Activated naive CD8-positive, alpha-beta T cell treated with anti-CD3 and anti-CD28 coated beads, Interleukin-2, amount 10 ng/mL, durations not matched to agents 7 days and 5 days (primary cell): ENCODE measurements at regions of chr21 and their contacts with region 1.

Region 1: DNA sequence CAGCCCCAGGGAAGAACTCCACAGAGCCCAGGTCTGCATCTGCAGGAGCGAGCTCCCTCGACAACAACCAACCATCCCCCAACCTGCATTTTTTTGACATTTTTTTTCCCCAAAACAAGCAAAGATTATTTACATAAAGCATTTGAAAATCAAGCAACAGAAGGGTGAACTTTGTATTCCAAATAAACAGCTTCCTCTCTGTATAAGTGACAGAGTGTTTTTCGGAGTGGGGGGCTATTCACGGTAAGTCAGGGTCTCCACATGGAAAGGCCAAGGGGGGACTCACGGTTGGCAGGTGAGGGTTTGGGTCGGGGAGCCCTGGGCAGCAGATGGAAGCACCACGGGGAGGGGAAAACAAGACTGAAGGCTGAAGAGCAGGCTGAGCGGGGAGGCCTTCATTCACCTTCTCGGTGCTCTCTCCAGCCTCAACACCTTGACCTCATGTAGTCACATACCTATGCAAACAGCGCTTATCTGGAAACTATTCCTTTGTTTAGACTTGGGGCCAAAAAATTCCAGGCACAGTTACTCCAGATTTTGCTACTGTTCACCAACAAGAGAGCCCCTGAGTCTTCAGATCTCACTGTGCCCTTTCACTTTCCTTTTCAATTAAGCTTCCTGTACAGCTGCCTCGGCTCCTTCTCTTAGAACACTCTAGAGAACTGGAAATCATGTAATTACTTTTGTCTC is 27.6 kb downstream of the C2CD2 start:
- DNase-seq: peak; percentile 52
- ATAC-seq: peak; percentile 87
- H3K4me3 Mint-ChIP-seq: peak overlapping the region; percentile 92
- H3K27ac Mint-ChIP-seq: peak overlapping the region; percentile 97
- H3K4me1 Mint-ChIP-seq: peaks cover 50% of the 10 kb centered on the region
- H3K27me3 Mint-ChIP-seq: no peaks in the 10 kb centered on the region

Region 2: GRCh38 chr21:41726945-41727783 is 199.1 kb before region 1 on chr21:
- POLR2A ChIA-PET with region 1: no interaction called
- DNase-seq: no peak
- ATAC-seq: no peak
- H3K4me3 Mint-ChIP-seq: no peak overlapping the region
- H3K27ac Mint-ChIP-seq: no peak overlapping the region
- H3K4me1 Mint-ChIP-seq: no peaks in the 10 kb centered on the region
- H3K27me3 Mint-ChIP-seq: peaks cover 55% of the 10 kb centered on the region

Region 3: DNA sequence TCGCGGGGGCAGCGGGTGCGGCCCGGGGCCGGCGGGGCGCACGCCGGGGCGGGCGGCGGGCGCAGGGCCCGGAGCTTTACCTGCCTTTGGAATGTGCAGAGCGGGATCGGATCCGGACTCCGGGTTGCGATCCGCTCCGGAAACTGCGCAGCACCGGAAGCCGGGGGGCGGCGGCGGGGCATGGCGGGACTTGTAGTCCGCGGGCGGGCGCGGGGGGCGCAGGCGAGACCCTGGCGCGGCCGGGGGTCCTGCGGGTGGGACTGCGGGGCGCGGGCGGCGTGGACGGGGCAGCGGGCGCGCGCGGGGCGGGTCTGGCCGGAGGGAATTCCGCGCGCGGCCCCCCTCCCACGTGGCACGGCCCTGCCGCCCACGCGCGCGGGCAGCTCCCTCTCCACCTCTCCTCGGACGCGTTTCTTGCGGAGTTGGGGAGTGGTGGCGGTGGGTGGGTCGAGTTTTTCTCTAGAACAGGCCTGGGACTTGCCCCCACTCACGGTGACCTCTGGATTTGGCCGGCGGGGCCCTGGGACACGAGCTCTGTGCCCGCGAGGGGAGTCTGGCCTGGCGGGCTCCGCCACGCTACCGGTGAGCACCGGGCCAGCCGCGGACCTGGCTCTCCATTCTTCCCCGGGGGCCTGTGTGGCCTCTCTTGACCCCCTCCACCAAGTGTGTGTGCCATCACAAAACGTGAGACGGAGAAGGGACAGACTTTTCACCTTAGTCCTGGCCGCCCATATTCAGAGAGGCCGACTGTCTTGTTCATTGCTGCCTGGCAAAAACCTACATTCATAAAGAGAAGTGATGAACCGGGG is 46.9 kb before region 1 on chr21 and contains the start of gene PRDM15:
- POLR2A ChIA-PET with region 1: interaction called, 22 read pairs
- DNase-seq: peak; percentile 90
- ATAC-seq: peak; percentile 78
- H3K4me3 Mint-ChIP-seq: peak within 1 kb of the TSS; percentile 91
- H3K27ac Mint-ChIP-seq: peak within 1 kb of the TSS; percentile 95
- H3K4me1 Mint-ChIP-seq: peaks cover 14% of the 10 kb centered on the region
- H3K27me3 Mint-ChIP-seq: no peaks in the 10 kb centered on the region
- total RNA-seq, gene PRDM15: 14.2 to 14.8 TPM

Region 4: GRCh38 chr21:41895643-41896493 is 30.4 kb before region 1 on chr21:
- POLR2A ChIA-PET with region 1: interaction called, 12 read pairs
- DNase-seq: peak; percentile 66
- ATAC-seq: peak; percentile 85
- H3K4me3 Mint-ChIP-seq: peak overlapping the region; percentile 35
- H3K27ac Mint-ChIP-seq: peak overlapping the region; percentile 77
- H3K4me1 Mint-ChIP-seq: peaks cover 42% of the 10 kb centered on the region
- H3K27me3 Mint-ChIP-seq: no peaks in the 10 kb centered on the region